ENCODE measurements at regions of chr7 and their contacts with region 1.

Region 1: GRCh38 chr7:51995596-51996179 is 679.1 kb upstream of the COBL start:
- DNase-seq: no peak
- H3K4me3 ChIP-seq: no peak overlapping the region
- H3K4me3 Mint-ChIP-seq: no peak overlapping the region
- H3K27ac Mint-ChIP-seq: peak overlapping the region; percentile 31
- H3K4me1 ChIP-seq: peaks cover 38% of the 10 kb centered on the region
- H3K4me1 Mint-ChIP-seq: peaks cover 25% of the 10 kb centered on the region
- H3K27me3 ChIP-seq: no peaks in the 10 kb centered on the region
- H3K27me3 Mint-ChIP-seq: no peaks in the 10 kb centered on the region
- CTCF ChIP-seq: no peak

Region 2: DNA sequence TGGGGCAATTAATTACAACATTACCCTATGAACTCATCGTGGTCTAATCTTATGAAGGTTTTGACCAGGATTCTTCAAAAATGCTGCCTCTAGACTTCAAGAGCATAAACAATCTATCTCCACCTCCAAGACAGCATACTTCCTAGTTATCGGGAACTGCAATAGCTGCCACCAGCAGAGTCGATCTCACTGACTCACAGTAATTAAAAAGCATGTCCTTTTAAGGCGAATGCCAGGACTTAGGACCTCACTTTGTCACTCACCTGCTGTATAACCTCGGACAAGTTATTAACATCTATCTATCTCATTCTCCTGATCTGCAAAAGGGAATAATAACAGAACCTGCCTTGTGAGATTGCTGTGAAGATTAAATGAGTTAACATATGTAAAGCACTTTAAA is 13.0 kb before region 1 on chr7:
- CTCF ChIA-PET with region 1: no interaction called
- POLR2A ChIA-PET with region 1: no interaction called
- intact Hi-C with region 1: loop called (anchors 2 kb)
- DNase-seq: no peak
- H3K4me3 ChIP-seq: no peak overlapping the region
- H3K4me3 Mint-ChIP-seq: no peak overlapping the region
- H3K27ac Mint-ChIP-seq: no peak overlapping the region
- H3K4me1 ChIP-seq: peaks cover 14% of the 10 kb centered on the region
- H3K4me1 Mint-ChIP-seq: peaks cover 21% of the 10 kb centered on the region
- H3K27me3 ChIP-seq: no peaks in the 10 kb centered on the region
- H3K27me3 Mint-ChIP-seq: no peaks in the 10 kb centered on the region
- CTCF ChIP-seq: no peak

Region 3: DNA sequence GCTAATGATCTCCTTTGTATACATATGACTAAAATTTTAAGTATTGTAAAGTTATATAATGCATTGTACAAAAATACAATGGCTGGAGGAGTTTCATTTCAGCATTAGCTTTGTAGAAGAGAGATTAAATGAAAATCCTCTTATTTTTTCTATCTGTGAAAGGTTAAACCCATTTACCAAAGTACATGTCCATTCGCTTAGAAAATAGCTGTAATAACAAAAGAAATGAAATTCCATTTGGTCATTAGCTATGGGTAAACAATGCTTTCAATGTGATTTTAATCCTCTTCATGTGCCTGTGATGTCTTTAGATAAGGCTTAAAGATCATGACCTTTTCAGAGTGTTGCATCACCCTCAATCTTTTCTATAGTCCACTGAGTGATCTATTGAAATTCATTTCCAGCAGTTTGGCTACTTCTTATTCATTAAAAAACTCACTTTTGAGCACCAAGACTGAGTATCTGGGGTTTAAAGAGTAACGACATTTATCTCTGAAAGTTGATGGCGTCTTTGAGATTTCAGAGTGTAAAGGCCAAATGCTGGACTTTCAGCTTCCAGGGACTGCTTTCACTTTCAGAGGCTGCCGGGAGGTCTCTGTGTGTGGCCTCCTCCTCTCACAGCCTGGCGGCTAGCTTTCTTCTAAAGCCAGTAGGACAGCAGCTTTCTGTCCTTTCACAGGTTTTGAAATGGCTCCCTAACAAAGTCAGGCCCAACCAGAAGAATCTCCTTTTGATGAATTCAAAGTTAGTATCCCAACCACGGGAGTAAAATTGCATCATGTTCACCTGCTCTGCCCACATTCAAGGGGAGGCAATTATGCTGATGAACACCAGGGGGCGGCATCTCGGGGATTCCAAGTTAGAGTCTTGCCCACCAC is 22.4 kb after region 1 on chr7:
- CTCF ChIA-PET with region 1: no interaction called
- POLR2A ChIA-PET with region 1: no interaction called
- intact Hi-C with region 1: loop called (anchors 1 kb)
- DNase-seq: peak; percentile 69 to 71
- H3K4me3 ChIP-seq: no peak overlapping the region
- H3K4me3 Mint-ChIP-seq: no peak overlapping the region
- H3K27ac Mint-ChIP-seq: peak overlapping the region; percentile 39
- H3K4me1 ChIP-seq: peaks cover 18% of the 10 kb centered on the region
- H3K4me1 Mint-ChIP-seq: peaks cover 7% of the 10 kb centered on the region
- H3K27me3 ChIP-seq: no peaks in the 10 kb centered on the region
- H3K27me3 Mint-ChIP-seq: no peaks in the 10 kb centered on the region
- CTCF ChIP-seq: peak; percentile 44 to 75

Region 4: GRCh38 chr7:52119537-52119936 is 123.8 kb after region 1 on chr7:
- CTCF ChIA-PET with region 1: no interaction called
- POLR2A ChIA-PET with region 1: no interaction called
- intact Hi-C with region 1: no loop called
- DNase-seq: no peak
- H3K4me3 ChIP-seq: no peak overlapping the region
- H3K4me3 Mint-ChIP-seq: no peak overlapping the region
- H3K27ac Mint-ChIP-seq: peak overlapping the region; percentile 34
- H3K4me1 ChIP-seq: peaks cover 28% of the 10 kb centered on the region
- H3K4me1 Mint-ChIP-seq: peaks cover 24% of the 10 kb centered on the region
- H3K27me3 ChIP-seq: no peaks in the 10 kb centered on the region
- H3K27me3 Mint-ChIP-seq: no peaks in the 10 kb centered on the region
- CTCF ChIP-seq: no peak

Measured in Caco-2 (cell line).